ENCODE measurements at regions of chr18 and their contacts with region 1.

Region 1: DNA sequence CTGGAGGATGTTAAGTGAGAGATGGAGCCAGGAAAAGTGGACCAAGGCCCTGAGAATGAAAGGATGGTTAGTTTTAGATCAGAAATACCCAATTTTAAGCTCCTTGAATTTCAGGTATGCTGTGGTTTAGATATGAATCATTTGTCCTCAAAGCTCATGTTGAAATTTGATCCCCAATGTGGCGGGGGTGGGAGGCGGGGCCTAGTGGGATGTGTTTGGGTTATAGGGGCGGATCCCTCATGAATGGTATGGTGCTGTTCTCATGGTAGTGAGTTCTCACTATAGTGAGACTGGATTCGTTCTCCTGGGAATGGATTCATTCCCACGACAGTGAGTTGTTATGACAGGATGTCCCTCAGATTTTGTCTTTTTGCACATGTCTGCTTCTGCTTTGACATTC is 11.4 kb downstream of the MYO5B start:
- DNase-seq: no peak
- CTCF ChIP-seq: no peak

Region 2: GRCh38 chr18:50138181-50139064 is 45.1 kb before region 1 on chr18:
- CTCF ChIA-PET with region 1: no interaction called
- POLR2A ChIA-PET with region 1: no interaction called
- DNase-seq: no peak
- CTCF ChIP-seq: no peak

Region 3: GRCh38 chr18:50161597-50162561 is 21.7 kb before region 1 on chr18:
- CTCF ChIA-PET with region 1: no interaction called
- POLR2A ChIA-PET with region 1: no interaction called
- DNase-seq: no peak
- CTCF ChIP-seq: no peak

Region 4: DNA sequence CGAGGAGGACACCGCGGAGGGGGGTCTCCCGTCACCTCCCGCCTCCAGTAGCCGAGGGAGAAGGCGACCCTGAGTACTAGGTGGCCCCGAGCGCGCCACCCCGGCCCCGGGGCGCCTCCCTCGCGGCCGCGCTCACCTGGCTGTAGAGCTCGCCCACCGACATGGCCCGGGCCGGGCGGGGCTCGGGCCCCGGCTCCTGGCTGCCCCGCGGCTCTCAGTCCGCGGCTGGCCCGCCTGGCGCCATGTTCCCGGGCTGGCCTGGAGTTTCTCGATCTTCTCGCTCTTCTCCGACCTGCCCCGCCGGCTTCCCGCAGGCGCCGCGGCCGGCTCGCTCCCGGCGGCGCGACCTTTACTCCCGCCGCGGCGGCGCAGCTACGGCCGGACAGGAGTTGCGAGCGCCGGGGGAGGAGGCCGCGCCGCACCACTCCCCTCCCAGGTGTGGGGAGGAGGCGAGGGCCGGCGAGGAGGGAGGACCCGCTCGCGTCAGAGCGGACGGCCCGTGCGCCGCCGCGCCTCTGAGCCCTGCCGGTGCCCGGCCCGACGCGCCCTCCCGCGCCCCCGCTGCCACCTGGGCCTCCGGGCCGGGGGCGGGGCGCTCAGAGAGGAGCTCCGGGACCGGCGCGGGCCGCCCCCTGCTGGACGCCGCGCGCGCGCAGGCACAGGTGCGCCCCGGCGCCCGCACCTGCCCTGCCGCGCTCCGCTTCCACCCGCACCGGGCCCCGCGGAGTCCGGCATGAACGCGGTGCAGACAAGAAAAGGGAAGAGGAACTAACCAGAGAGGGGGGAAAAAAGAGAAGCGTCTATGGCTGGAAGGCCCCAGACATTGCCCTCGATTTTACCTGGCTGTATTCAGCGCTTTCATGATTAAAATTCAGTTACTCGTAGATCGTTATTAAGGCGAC is 11.3 kb after region 1 on chr18 and contains the start of gene MYO5B:
- CTCF ChIA-PET with region 1: interaction called, 20 read pairs
- POLR2A ChIA-PET with region 1: no interaction called
- DNase-seq: peak; percentile 83
- CTCF ChIP-seq: peak; percentile 63